Activated naive CD4-positive, alpha-beta T cell treated with anti-CD3 and anti-CD28 coated beads for 36 hours (primary cell): ENCODE measurements at regions of chr7 and their contacts with region 1.

Region 1: DNA sequence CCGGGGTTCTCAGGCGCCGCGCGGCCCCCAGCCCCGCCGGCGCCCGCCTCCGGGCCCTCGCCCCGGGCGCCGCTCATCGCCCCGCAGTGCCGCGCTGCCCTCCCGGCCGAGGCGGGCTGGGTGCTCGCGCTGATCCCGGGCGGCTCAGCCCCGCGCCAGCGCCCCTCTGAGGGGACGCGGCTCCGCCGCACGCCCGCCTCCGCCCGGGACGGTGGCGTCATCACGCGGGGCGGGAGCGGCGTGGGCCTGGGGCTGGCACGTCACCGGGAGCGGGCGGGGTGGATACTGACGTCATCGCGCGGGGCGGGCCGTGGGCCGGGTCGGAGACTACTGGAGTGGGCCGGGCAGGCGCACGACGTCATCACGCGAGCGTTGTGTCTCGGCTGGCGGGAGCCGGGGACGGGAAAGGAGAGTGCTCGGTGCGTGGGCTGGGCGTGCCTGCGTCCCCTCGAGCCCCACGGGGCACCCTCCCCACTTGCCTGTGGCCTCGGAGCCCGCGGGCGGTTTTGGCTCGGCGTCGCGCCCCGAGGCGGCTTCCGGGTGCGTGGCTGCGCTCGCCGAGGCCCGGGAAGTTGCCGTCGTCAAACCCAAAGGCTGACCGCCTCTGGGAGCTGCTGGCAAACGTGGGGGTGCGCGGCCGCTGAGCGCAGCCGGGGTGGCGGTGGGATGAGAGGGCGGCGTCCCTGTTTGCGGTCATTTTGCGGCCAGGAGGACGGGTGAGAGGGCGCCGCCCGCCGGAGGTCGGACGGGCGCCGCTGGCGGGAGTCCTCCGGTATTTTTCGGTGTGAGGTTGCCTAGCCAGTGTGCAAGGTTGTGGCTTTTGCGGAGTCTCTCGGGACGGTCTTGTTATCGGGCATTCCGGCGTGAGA is at the start of gene ESYT2:
- DNase-seq: peak; percentile 98
- H3K4me3 Mint-ChIP-seq: peak within 1 kb of the TSS; percentile 98
- H3K27ac Mint-ChIP-seq: peak within 1 kb of the TSS; percentile 94
- H3K4me1 Mint-ChIP-seq: peaks cover 27% of the 10 kb centered on the region
- H3K27me3 Mint-ChIP-seq: no peaks in the 10 kb centered on the region
- total RNA-seq, gene ESYT2: 41.7 to 44.3 TPM

Region 2: DNA sequence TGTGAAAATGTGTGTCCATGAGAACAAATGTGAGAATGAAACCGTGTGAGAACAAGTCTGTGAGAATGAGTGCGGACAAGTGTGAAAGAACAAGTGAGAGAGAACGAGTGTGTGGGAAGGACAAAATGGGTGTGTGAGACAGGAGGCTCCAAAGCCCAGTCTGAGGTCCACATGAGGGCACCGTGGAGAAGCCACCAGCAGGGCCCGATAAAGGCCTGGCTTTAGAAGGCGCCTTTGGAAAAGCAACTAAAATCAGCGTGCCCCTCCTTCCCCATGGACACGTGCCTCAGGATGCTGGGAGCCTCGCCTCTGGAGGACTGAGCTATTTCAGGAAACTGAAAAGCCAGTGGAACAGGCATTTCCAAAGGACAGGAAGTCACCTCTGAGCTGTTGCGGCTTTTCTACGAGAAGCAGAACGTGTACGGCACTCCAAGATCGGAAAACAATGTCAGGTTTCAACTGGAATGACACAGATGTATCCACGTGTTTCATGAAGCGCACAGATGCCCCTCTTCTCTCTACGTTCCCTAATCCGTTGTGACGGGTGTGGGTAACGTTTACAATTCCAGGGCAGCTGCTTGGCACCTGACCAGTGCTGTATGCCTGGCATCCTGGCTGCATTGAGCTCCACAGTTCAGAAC is 46.7 kb before region 1 on chr7:
- CTCF ChIA-PET with region 1: interaction called, 3 read pairs
- intact Hi-C with region 1: loop called (anchors 2 kb)
- DNase-seq: peak; percentile 45
- H3K4me3 Mint-ChIP-seq: no peak overlapping the region
- H3K27ac Mint-ChIP-seq: no peak overlapping the region
- H3K4me1 Mint-ChIP-seq: peaks cover 14% of the 10 kb centered on the region
- H3K27me3 Mint-ChIP-seq: no peaks in the 10 kb centered on the region

Region 3: DNA sequence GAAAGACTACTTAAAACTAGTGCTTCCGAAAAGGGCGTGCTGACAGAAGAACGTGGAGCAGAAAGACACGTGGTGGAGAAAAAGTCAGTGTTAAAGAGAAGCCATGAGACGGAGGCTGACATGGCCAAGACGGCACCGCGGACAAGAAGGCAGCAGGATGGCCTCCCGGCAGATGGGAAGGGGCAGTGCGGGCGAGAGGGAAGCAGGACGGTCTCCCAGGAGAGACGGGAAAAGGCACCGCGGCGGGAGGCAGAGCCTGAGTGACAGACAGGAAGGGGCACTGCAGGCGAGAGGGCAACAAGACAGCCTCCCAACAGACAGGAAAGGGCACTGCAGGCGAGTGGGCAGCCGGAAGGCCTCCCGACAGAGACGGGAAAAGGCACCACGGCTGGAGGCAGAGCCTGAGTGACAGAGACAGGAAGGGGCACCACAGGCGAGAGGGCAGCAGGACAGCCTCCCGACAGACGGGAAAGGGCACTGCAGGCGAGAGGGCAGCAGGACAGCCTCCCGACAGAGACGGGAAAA is 33.0 kb before region 1 on chr7:
- CTCF ChIA-PET with region 1: no interaction called
- intact Hi-C with region 1: no loop called
- DNase-seq: no peak
- H3K4me3 Mint-ChIP-seq: no peak overlapping the region
- H3K27ac Mint-ChIP-seq: peak overlapping the region; percentile 27
- H3K4me1 Mint-ChIP-seq: peaks cover 25% of the 10 kb centered on the region
- H3K27me3 Mint-ChIP-seq: no peaks in the 10 kb centered on the region

Region 4: DNA sequence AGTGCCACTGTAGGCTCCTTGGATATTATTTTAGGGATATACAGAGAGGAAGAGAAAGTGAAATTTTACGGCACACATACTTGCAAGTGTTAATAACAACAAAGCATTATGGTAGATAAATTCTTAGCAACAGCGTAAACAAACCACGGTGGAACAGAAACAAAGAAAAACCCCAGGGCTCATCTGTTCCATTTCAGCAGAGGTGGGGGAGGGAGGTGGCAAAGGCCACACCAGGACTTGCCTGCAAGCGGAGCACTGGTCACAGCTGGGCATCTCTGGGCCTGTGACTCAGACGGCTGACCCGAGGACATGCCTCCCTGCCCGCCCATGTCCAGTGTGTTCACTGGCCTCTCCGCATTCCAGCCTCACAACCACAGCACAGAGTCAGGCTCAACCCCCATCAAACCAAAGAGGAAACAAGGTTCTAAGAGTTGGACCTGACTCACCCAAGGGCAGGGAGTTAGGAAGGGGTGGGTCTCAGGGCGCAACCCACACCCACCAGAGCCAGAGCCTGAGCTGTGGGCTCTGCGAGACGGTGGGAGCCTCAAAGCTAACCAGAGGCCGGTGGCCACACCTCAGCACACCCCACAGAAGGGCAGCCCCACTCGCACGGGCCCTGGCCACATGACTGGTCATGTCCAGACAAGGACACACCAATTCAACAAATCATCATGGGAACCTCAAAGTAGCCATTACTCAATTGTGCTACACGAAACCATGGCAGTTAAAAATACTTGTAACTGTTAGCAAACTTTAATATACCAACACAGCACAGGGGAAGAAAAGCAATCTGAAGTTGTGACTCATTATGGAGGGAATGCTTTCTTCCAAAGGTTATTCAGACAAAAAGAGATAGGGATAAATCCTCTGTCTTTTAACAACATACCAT is 11.0 kb before region 1 on chr7:
- CTCF ChIA-PET with region 1: interaction called, 10 read pairs
- intact Hi-C with region 1: loop called (anchors 1 kb)
- DNase-seq: peak; percentile 84
- H3K4me3 Mint-ChIP-seq: peak overlapping the region; percentile 81
- H3K27ac Mint-ChIP-seq: peak overlapping the region; percentile 97
- H3K4me1 Mint-ChIP-seq: peaks cover 85% of the 10 kb centered on the region
- H3K27me3 Mint-ChIP-seq: no peaks in the 10 kb centered on the region

Region 5: DNA sequence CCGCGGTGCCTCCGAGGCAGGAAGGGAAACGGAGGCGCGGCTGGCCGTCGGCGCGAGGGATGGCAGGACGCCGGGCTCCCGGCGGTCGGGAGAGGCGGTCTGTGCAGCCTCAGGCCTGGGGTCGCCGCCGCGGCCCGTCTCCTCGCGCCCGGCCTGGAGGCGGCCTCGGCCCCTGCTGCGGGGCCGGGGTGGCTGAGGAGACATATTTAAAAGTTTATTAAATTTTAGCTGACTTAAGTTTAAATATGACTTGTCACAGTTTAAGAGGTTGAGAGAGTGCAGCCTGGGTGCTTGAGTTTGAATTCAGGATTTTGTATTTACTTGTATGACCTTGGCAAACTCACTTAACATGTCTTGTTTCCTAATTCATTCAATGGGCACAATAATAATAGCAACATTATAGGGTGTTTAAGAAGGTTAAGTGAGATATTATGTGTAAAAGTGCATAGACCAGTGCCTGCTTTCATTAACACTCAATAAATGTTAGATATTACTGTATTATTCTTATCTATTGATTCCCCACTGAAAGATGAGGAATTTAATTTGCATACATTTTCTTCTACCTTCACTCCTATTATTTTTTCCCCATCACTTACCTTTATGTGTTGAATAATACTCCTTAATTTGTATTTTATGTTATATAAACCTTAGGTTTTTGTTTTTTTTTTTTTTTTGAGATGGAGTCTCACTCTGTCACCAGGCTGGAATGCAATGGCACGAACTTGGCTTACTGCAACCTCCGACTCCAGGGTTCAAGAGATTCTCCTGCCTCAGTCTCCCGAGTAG is 27.5 kb after region 1 on chr7:
- CTCF ChIA-PET with region 1: no interaction called
- intact Hi-C with region 1: loop called (anchors 1 kb)
- DNase-seq: no peak
- H3K4me3 Mint-ChIP-seq: peak overlapping the region; percentile 99
- H3K27ac Mint-ChIP-seq: peak overlapping the region; percentile 36
- H3K4me1 Mint-ChIP-seq: peaks cover 32% of the 10 kb centered on the region
- H3K27me3 Mint-ChIP-seq: no peaks in the 10 kb centered on the region